ENCODE measurements at regions of chr3 and their contacts with region 1.

Region 1: GRCh38 chr3:72447059-72447946 is 400.9 kb downstream of the SHQ1 start:
- DNase-seq: peak; percentile 96
- ATAC-seq: peak; percentile 98
- H3K4me3 ChIP-seq: peak overlapping the region in 4 of 5 experiments; percentile 71 to 81 (median 76)
- H3K4me3 Mint-ChIP-seq: peak overlapping the region; percentile 84
- H3K27ac ChIP-seq: peak overlapping the region in 1 of 2 donors; percentile 68
- H3K27ac Mint-ChIP-seq: peak overlapping the region; percentile 84
- H3K4me1 ChIP-seq: peaks cover 28 to 41% of the 10 kb centered on the region in 2 donors
- H3K4me1 Mint-ChIP-seq: peaks cover 36% of the 10 kb centered on the region
- H3K27me3 ChIP-seq: peaks cover 0 to 4% (median 0%) of the 10 kb centered on the region in 4 experiments
- H3K27me3 Mint-ChIP-seq: peaks cover 24% of the 10 kb centered on the region
- CTCF ChIP-seq: no peak

Region 2: DNA sequence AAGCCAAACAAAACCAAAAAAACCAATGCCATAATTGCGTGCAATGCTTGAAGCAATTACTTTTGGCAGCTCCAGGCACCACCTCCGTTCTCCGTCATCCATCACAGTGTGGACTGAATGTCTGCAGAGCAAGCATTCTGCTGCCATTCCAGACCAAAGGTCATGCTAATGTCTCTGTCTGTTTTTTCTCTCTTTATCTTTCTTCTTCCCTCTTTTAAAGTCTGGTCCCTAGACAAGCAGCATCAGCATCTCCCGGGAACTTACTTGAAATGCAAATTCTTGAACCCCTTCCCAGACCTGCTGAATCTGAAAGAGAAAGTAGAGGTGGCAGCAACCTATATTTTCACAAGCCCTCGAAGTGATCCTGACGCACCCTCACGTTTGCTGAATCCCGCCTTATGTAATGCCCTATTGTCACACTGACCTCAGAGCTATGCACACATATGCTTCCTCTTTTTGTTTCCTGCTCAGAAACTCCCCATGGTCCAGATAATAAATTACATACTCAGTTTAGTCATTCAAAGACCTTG is 365.1 kb before region 1 on chr3:
- CTCF ChIA-PET with region 1: no interaction called
- POLR2A ChIA-PET with region 1: no interaction called
- intact Hi-C with region 1: loop called (anchors 2 kb)
- DNase-seq: peak; percentile 89
- ATAC-seq: peak; percentile 84
- H3K4me3 ChIP-seq: peak overlapping the region in 4 of 5 experiments; percentile 3 to 31 (median 12)
- H3K4me3 Mint-ChIP-seq: peak overlapping the region; percentile 61
- H3K27ac ChIP-seq: peak overlapping the region; percentile 43 to 66
- H3K27ac Mint-ChIP-seq: peak overlapping the region; percentile 47
- H3K4me1 ChIP-seq: peaks cover 65 to 73% of the 10 kb centered on the region in 2 donors
- H3K4me1 Mint-ChIP-seq: peaks cover 71% of the 10 kb centered on the region
- H3K27me3 ChIP-seq: peaks cover 0 to 12% (median 4%) of the 10 kb centered on the region in 4 experiments
- H3K27me3 Mint-ChIP-seq: peaks cover 8% of the 10 kb centered on the region
- CTCF ChIP-seq: no peak

Region 3: DNA sequence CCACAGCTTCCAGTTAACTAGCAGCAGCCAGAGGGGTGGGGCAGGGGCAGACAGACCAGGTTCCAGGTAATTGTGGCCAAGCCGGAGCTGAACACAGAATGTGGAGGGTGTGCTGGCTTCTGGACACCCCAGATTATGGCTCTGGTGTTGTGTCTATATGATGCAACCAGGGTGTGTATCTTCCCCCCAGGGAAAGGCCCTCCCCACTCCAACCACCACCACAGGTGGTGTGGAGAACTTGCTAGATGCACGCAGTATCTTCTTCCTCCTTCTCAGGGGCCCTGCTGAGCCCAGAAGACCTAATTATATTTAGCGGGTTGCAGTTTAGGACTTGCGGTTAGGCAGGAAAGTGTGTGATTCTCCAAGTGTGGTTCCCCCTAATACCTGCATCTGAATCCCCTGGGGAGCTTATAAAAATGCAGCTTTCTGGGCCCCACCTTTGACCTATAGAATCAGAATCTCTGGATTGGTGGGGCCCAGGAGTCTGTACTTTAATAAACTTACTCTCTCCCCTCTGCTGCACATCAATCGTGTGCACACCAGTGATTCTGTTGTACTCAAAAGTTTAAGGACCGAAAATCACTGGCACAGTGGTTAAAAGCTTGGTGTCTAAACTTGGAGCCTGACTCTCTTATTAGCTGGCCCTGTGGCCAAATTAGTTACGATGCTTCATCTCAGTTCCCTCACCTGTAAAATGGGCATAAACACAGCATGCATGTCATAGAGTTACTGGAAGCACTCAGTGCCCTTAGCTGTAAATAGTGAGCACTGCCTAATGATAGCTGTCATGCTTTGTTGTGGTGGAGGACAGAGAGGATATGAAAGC is 283.3 kb before region 1 on chr3:
- CTCF ChIA-PET with region 1: no interaction called
- POLR2A ChIA-PET with region 1: no interaction called
- intact Hi-C with region 1: loop called (anchors 5 kb)
- DNase-seq: peak; percentile 92
- ATAC-seq: peak; percentile 93
- H3K4me3 ChIP-seq: peak overlapping the region in 2 of 5 experiments; percentile 14 to 43
- H3K4me3 Mint-ChIP-seq: peak overlapping the region; percentile 75
- H3K27ac ChIP-seq: peak overlapping the region; percentile 83 to 86
- H3K27ac Mint-ChIP-seq: peak overlapping the region; percentile 61
- H3K4me1 ChIP-seq: peaks cover 47 to 52% of the 10 kb centered on the region in 2 donors
- H3K4me1 Mint-ChIP-seq: peaks cover 57% of the 10 kb centered on the region
- H3K27me3 ChIP-seq: peaks cover 0 to 2% (median 0%) of the 10 kb centered on the region in 4 experiments
- H3K27me3 Mint-ChIP-seq: peaks cover 12% of the 10 kb centered on the region
- CTCF ChIP-seq: no peak

Region 4: DNA sequence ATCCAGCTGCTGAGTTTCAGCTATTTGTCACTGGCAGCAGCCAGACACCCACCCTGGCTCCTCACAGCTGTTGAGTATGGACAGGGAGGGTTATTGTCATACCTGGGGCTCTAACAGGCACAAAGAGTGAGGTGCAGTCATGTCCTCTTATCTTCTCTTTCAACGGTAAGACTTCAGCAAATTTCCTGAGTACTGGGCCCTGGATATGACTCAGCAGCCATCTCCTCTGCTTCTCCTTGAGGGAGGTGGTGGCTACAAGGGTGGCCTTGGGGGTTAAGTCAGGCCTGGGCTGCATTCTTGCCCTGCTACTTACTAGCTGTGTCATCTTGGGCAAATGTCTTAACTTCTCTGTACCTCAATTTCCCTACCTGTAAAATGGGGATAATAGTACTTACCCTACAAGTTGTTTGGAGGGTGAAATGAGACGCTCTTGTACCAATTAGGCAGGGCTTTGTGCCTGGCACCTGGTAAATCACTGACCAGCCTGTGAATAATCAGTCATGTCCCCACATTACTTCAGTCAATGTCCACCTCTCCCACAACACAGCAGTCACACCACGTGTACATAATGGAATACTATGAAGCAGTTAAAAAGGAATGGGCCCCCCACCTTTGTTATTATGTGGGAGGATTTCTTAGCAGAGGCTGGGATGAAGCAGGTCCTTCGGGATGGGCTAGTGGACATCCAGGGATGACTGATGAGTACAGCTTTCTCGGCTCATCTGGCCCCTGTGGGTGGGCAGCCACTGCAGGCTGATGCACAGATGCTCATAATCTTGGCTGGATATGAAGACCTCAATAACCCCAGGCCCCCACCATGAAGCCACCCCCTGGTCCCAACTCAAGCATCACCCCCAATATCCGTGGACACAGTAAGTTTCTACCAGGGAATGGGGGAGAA is 127.9 kb before region 1 on chr3:
- CTCF ChIA-PET with region 1: no interaction called
- POLR2A ChIA-PET with region 1: no interaction called
- intact Hi-C with region 1: no loop called
- DNase-seq: no peak
- ATAC-seq: no peak
- H3K4me3 ChIP-seq: no peak overlapping the region
- H3K4me3 Mint-ChIP-seq: no peak overlapping the region
- H3K27ac ChIP-seq: no peak overlapping the region
- H3K27ac Mint-ChIP-seq: no peak overlapping the region
- H3K4me1 ChIP-seq: no peaks in the 10 kb centered on the region
- H3K4me1 Mint-ChIP-seq: no peaks in the 10 kb centered on the region
- H3K27me3 ChIP-seq: no peaks in the 10 kb centered on the region
- H3K27me3 Mint-ChIP-seq: no peaks in the 10 kb centered on the region
- CTCF ChIP-seq: no peak

Region 5: DNA sequence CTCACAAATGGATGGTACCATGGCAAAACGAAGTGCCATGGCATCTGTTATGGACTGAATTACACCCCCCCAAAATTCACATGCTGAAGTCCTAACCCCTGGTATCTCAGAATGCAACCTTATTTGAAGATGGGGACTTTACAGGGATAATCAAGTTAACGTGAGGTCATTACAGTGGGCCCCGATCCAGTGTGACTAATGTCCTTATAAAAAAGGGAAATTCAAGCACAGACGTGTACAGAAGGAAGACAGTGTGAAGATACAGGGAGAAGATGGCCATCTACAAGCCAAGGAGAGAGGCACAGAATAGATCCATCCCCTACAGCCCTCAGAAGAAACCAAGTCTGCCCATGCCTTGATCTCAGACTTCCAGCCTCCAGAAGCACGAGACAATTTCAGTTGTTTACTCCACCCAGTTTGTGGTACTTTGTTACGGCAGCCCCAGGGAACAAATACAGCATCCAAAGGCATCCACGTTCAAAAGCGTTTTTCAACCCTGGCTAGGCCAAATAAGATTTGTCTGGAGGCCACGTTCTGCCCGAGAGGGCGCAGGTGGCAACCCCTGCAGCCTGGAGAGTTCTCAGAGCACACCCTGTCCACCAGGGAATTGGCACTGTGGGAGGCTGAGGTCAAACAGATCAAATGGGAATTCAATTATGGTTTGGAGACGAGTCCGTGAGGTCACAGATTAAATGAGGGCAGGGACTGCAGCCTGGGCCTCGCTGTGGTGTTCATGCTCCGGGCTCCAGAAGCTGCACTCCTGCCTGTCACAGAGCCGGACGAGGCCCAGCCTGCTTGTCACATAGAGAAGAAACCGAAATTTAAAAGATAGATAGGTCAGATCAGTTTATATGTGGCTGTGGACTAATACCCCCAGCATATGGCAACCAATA is 93.8 kb before region 1 on chr3:
- CTCF ChIA-PET with region 1: no interaction called
- POLR2A ChIA-PET with region 1: no interaction called
- intact Hi-C with region 1: no loop called
- DNase-seq: no peak
- ATAC-seq: no peak
- H3K4me3 ChIP-seq: no peak overlapping the region
- H3K4me3 Mint-ChIP-seq: no peak overlapping the region
- H3K27ac ChIP-seq: no peak overlapping the region
- H3K27ac Mint-ChIP-seq: no peak overlapping the region
- H3K4me1 ChIP-seq: peaks cover 0 to 3% of the 10 kb centered on the region in 2 donors
- H3K4me1 Mint-ChIP-seq: no peaks in the 10 kb centered on the region
- H3K27me3 ChIP-seq: peaks cover 0 to 14% (median 3%) of the 10 kb centered on the region in 4 experiments
- H3K27me3 Mint-ChIP-seq: peaks cover 16% of the 10 kb centered on the region
- CTCF ChIP-seq: no peak

Region 6: GRCh38 chr3:72426618-72427397 is 20.5 kb before region 1 on chr3:
- CTCF ChIA-PET with region 1: no interaction called
- POLR2A ChIA-PET with region 1: no interaction called
- intact Hi-C with region 1: loop called (anchors 2 kb)
- DNase-seq: no peak
- ATAC-seq: no peak
- H3K4me3 ChIP-seq: peak overlapping the region in 1 of 5 experiments; percentile 24
- H3K4me3 Mint-ChIP-seq: peak overlapping the region; percentile 77
- H3K27ac ChIP-seq: peak overlapping the region in 1 of 2 donors; percentile 9
- H3K27ac Mint-ChIP-seq: no peak overlapping the region
- H3K4me1 ChIP-seq: peaks cover 17 to 50% of the 10 kb centered on the region in 2 donors
- H3K4me1 Mint-ChIP-seq: peaks cover 62% of the 10 kb centered on the region
- H3K27me3 ChIP-seq: no peaks in the 10 kb centered on the region
- H3K27me3 Mint-ChIP-seq: no peaks in the 10 kb centered on the region
- CTCF ChIP-seq: no peak

Region 7: GRCh38 chr3:72847751-72848702 is 400.7 kb after region 1 on chr3 and contains the start of gene SHQ1:
- CTCF ChIA-PET with region 1: no interaction called
- POLR2A ChIA-PET with region 1: no interaction called
- intact Hi-C with region 1: loop called (anchors 2 kb)
- DNase-seq: peak; percentile 95
- ATAC-seq: peak; percentile 94
- H3K4me3 ChIP-seq: peak within 1 kb of the TSS; percentile 67 to 92 (median 85)
- H3K4me3 Mint-ChIP-seq: peak within 1 kb of the TSS; percentile 93
- H3K27ac ChIP-seq: peak within 1 kb of the TSS in 1 of 2 donors; percentile 50
- H3K27ac Mint-ChIP-seq: peak within 1 kb of the TSS; percentile 82
- H3K4me1 ChIP-seq: peaks cover 18 to 20% of the 10 kb centered on the region in 2 donors
- H3K4me1 Mint-ChIP-seq: peaks cover 35% of the 10 kb centered on the region
- H3K27me3 ChIP-seq: no peaks in the 10 kb centered on the region
- H3K27me3 Mint-ChIP-seq: no peaks in the 10 kb centered on the region
- CTCF ChIP-seq: no peak
- total RNA-seq, gene SHQ1: 30.6 and 32.0 TPM in 2 replicates

Measured in B cell (primary cell).